ENCODE measurements at regions of chr9 and their contacts with region 1.

Region 1: GRCh38 chr9:95981761-95982390 is 106.4 kb downstream of the ERCC6L2 start:
- DNase-seq: peak; percentile 93
- H3K4me3 ChIP-seq: peak overlapping the region; percentile 15
- H3K27ac ChIP-seq: peak overlapping the region; percentile 63
- H3K4me1 ChIP-seq: peaks cover 57% of the 10 kb centered on the region
- H3K27me3 ChIP-seq: no peaks in the 10 kb centered on the region
- CTCF ChIP-seq: no peak

Region 2: DNA sequence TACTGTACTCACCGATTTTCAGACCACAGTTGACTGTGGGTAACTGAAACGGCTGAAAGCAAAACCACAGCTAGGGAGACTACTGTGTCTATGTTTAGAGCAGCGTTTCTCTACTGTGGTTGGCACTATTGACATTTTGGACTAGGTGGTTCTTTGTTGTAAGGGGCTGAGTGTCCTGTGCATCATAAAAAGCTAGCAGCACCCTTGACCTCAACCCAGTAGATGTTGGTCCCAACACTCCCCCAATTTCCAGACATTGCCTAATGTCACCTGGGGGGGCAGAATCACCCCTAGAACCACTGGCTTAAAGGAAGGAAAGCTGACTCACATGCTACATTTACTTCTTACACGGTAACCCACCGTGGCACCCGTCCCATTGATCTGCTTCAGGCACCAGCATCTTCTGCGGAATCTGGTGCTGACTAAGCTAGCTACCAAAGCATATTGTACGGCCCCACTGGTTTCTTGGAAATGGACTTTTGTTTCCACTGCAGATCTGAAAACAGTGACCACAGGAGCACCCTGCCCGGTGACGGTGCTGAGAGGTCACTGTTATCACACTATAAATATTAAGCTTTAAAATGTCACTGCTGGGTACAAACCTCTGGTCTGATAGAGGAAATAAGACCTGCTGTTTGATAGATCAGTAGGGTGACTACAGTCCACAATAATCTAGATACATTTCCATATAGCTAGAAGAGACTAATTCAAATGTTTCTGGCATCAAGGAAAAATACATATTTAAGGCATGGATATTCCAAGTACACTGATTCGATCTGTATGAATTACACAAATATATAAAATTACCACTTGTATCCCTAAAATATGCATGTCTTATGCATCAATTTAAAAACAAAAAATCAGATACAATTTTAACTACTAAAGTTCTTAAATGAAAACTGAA is 168.7 kb after region 1 on chr9:
- CTCF ChIA-PET with region 1: no interaction called
- POLR2A ChIA-PET with region 1: no interaction called
- intact Hi-C with region 1: no loop called
- DNase-seq: no peak
- H3K4me3 ChIP-seq: no peak overlapping the region
- H3K27ac ChIP-seq: no peak overlapping the region
- H3K4me1 ChIP-seq: no peaks in the 10 kb centered on the region
- H3K27me3 ChIP-seq: no peaks in the 10 kb centered on the region
- CTCF ChIP-seq: no peak

Region 3: GRCh38 chr9:96391021-96391765 is 409.3 kb after region 1 on chr9:
- CTCF ChIA-PET with region 1: no interaction called
- POLR2A ChIA-PET with region 1: interaction called, 12 read pairs
- intact Hi-C with region 1: no loop called
- DNase-seq: no peak
- H3K4me3 ChIP-seq: no peak overlapping the region
- H3K27ac ChIP-seq: no peak overlapping the region
- H3K4me1 ChIP-seq: no peaks in the 10 kb centered on the region
- H3K27me3 ChIP-seq: no peaks in the 10 kb centered on the region
- CTCF ChIP-seq: no peak

Measured in A673 (cell line).